Mammary epithelial cell (primary cell): ENCODE measurements at regions of chr19 and their contacts with region 1.

Region 1: GRCh38 chr19:5369962-5370367 is 29.4 kb upstream of the PTPRS start:
- DNase-seq: no peak
- H3K4me3 ChIP-seq: no peak overlapping the region
- H3K27ac ChIP-seq: no peak overlapping the region
- H3K4me1 ChIP-seq: no peaks in the 10 kb centered on the region
- H3K27me3 ChIP-seq: no peaks in the 10 kb centered on the region
- CTCF ChIP-seq: peak; percentile 57 to 71

Region 2: GRCh38 chr19:5131031-5131505 is 238.9 kb before region 1 on chr19:
- CTCF ChIA-PET with region 1: no interaction called
- dilution Hi-C with region 1: loop called (anchors 5 kb)
- in situ Hi-C with region 1: no loop called
- intact Hi-C with region 1: no loop called
- DNase-seq: no peak
- H3K4me3 ChIP-seq: no peak overlapping the region
- H3K27ac ChIP-seq: no peak overlapping the region
- H3K4me1 ChIP-seq: no peaks in the 10 kb centered on the region
- H3K27me3 ChIP-seq: no peaks in the 10 kb centered on the region
- CTCF ChIP-seq: no peak

Region 3: GRCh38 chr19:5231857-5232503 is 138.0 kb before region 1 on chr19:
- CTCF ChIA-PET with region 1: no interaction called
- dilution Hi-C with region 1: loop called (anchors 5 kb)
- in situ Hi-C with region 1: no loop called
- intact Hi-C with region 1: no loop called
- DNase-seq: no peak
- H3K4me3 ChIP-seq: no peak overlapping the region
- H3K27ac ChIP-seq: no peak overlapping the region
- H3K4me1 ChIP-seq: no peaks in the 10 kb centered on the region
- H3K27me3 ChIP-seq: no peaks in the 10 kb centered on the region
- CTCF ChIP-seq: no peak

Region 4: DNA sequence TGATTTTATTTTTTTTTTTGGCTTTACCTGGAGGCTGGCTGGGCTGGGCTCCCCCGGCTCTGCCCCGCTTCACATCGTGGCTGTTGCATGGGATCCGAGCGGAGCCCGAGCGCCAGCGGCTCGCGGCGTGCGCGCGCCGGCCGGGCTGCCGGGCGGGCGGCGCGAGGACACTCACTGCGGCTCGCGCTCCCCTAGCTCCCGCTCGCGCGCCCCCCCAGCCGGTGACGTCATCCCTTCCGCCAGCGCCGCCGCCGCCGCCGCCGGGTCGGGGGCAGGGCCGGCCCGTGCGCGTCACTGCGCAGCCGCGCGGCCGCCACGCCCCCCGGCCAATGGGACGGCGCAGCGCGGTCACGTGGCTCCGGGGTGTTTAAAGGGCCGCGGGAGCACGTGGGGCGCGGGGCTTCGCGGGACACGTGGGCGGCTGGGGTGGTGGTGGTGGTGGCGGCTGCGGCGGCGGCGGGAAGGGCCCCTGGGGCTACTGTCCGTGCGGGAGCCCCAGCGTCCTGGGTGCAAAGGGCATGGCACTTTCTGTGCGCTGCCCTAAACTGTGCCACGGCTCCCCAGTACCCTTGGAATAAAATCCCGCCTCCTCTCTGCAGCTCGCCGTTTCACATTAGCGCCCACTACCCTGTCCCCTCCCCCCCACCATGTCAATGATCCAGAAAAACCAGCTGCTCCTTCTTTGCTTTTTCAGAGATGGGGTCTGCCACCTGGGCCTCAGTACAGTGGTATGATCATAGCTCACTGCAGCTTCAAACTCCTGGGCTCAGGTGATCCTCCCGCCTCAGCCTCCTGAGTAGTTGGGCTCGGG is 29.1 kb before region 1 on chr19 and contains the start of gene PTPRS:
- CTCF ChIA-PET with region 1: no interaction called
- dilution Hi-C with region 1: no loop called
- in situ Hi-C with region 1: no loop called
- intact Hi-C with region 1: no loop called
- DNase-seq: peak; percentile 69
- H3K4me3 ChIP-seq: peak within 1 kb of the TSS; percentile 54 to 57 (median 54)
- H3K27ac ChIP-seq: no peak within 1 kb of the TSS
- H3K4me1 ChIP-seq: peaks cover 12% of the 10 kb centered on the region
- H3K27me3 ChIP-seq: peaks cover 11% of the 10 kb centered on the region
- CTCF ChIP-seq: no peak
- total RNA-seq, gene PTPRS: 32.2 to 93.4 TPM

Region 5: GRCh38 chr19:5352229-5352763 is 17.7 kb before region 1 on chr19:
- CTCF ChIA-PET with region 1: no interaction called
- dilution Hi-C with region 1: no loop called
- in situ Hi-C with region 1: no loop called
- intact Hi-C with region 1: no loop called
- DNase-seq: peak; percentile 66
- H3K4me3 ChIP-seq: no peak overlapping the region
- H3K27ac ChIP-seq: no peak overlapping the region
- H3K4me1 ChIP-seq: no peaks in the 10 kb centered on the region
- H3K27me3 ChIP-seq: peaks cover 2% of the 10 kb centered on the region
- CTCF ChIP-seq: no peak

Region 6: GRCh38 chr19:5425260-5425659 is 55.3 kb after region 1 on chr19:
- CTCF ChIA-PET with region 1: no interaction called
- dilution Hi-C with region 1: loop called (anchors 5 kb)
- in situ Hi-C with region 1: no loop called
- intact Hi-C with region 1: no loop called
- DNase-seq: no peak
- H3K4me3 ChIP-seq: no peak overlapping the region
- H3K27ac ChIP-seq: no peak overlapping the region
- H3K4me1 ChIP-seq: no peaks in the 10 kb centered on the region
- H3K27me3 ChIP-seq: peaks cover 5% of the 10 kb centered on the region
- CTCF ChIP-seq: no peak

Region 7: DNA sequence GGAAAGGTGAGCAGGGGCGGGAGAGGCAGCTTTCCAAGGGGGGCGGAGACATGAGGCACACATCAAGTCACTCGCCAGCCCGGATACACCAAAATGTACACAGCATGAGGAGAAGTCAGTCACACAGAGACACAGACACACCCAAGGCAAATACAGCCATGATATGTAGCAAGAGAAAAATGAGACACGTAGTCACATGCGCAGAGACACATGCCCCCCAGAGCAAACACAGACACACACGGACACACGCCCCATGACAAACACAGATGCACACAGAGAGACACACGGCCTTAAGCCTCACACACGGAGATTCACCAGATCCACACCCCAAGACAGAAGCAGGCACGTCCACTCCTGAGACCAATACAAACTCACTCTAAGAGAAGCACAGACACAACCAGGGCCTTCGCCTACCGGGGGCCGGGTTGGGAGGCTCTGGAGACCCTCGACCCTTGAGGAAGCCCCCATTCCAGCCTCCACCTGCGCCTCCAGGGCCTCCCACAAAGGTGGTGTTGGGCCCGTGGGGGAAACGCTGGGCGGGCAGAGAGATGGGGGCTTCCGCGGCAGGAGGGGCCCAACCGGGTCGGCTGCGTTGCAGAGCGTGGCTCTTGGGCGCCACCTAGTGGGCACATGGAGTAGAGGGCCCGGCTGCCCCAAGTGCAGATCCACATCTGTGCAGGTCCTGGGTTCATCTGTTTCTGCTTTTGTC is 208.0 kb after region 1 on chr19:
- CTCF ChIA-PET with region 1: no interaction called
- dilution Hi-C with region 1: no loop called
- in situ Hi-C with region 1: no loop called
- intact Hi-C with region 1: loop called (anchors 2 kb)
- DNase-seq: peak; percentile 67
- H3K4me3 ChIP-seq: peak overlapping the region in 1 of 3 experiments; percentile 42
- H3K27ac ChIP-seq: no peak overlapping the region
- H3K4me1 ChIP-seq: peaks cover 8% of the 10 kb centered on the region
- H3K27me3 ChIP-seq: no peaks in the 10 kb centered on the region
- CTCF ChIP-seq: peak; percentile 85 to 99